Activated CD4-positive, alpha-beta T cell treated with anti-CD3 and anti-CD28 coated beads for 36 hours (primary cell): ENCODE measurements at regions of chr1 and their contacts with region 1.

Region 1: DNA sequence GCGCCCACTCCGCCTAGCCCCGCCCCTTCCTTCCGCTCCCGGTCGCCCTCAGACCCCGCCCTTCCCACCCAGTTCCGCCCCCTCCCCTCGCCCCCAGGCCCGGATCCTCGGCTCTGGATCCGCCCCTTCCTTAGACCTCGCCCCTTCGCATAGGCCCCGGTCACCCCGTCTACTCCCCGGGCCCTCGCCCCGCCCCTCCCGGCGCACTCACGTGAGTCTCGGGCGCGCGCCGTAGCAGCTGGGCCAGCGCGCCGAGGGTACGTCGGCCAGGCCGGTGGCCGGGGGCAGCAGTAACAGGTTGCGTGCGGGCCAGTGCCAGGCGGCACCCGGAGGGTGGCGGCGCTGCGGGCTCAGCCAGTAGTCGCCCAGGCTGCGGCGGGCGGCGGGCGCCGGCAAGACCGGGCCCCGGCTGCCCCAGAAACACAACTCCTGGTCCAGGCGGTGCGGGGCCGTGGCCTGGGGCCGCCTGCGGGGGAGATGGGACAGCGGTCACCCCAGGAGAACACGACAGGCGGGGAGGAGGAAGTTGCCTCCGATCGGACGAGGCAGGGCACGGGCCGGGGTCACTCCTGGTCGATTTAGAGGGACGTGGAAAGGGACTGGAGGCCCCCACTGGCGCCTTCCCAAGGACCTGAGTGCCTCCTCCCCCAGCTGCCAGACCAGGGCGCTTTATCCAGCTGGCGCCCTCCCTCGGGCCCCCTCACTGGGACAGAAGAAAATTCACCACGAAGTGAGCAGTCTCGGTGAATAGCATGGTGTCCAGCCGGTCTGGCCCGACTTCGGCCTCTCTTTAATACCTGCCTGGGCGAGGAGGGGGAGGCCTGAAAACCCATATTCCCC is 10.7 kb downstream of the FAM229A start:
- DNase-seq: peak; percentile 96
- ATAC-seq: peak; percentile 96
- H3K4me3 Mint-ChIP-seq: peak overlapping the region; percentile 73
- H3K27ac Mint-ChIP-seq: peak overlapping the region; percentile 82
- H3K4me1 Mint-ChIP-seq: peaks cover 20% of the 10 kb centered on the region
- H3K27me3 Mint-ChIP-seq: no peaks in the 10 kb centered on the region

Region 2: DNA sequence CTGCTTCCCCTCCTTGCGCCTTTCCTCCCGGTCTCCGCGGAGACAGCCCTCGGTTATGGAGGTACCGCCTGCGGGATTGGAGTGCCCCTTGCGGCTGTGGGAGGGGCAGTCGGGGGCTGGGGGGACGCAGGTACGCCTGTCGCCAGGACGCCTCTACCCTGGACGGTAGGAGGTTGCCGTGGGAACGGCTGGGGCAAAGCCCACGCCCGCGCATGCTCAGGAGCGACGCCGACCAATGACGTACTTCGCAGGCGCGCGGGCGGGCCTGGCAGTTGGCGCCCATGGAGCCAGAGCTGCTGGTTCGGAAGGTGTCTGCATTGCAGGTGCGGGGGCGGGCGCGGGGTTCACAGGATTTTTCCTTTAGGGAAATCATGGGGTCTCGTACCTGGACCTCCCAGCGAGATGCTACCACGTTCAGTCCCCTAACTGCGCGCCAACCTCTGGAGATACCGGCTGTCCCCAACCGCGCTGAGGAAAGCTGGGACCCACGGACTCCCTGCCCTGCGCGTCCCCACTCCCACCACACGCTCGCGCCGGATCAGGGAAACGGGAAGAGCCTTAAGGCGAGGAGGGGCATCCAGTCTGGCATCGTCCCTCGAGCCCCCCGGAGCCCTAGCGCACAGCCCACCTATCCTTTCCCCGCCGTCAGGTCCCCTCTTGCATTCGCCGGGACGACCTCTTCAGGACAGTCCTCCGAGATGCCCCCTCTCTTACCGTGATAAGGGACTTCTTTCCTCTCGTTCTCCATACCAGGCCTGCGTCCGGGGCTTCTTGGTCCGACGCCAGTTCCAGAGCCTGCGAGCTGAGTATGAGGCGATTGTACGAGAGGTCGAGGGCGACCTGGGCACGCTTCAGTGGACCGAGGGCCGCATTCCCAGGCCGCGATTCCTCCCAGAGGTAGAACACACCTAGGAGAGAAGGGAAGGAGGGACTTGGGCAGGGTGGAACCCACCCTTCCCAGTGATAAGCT is 145.9 kb before region 1 on chr1 and contains the start of gene IQCC:
- CTCF ChIA-PET with region 1: no interaction called
- POLR2A ChIA-PET with region 1: no interaction called
- intact Hi-C with region 1: loop called (anchors 1 to 5 kb)
- DNase-seq: peak; percentile 94
- ATAC-seq: peak; percentile 75
- H3K4me3 Mint-ChIP-seq: peak within 1 kb of the TSS; percentile 90
- H3K27ac Mint-ChIP-seq: peak within 1 kb of the TSS; percentile 87
- H3K4me1 Mint-ChIP-seq: peaks cover 28% of the 10 kb centered on the region
- H3K27me3 Mint-ChIP-seq: no peaks in the 10 kb centered on the region
- total RNA-seq, gene IQCC: 4.4 to 5.0 TPM

Region 3: GRCh38 chr1:32273388-32274208 is 78.0 kb before region 1 on chr1:
- CTCF ChIA-PET with region 1: interaction called, 3 read pairs
- POLR2A ChIA-PET with region 1: no interaction called
- intact Hi-C with region 1: loop called in 1 of 2 experiments (anchors 1 kb)
- DNase-seq: peak; percentile 91
- ATAC-seq: peak; percentile 93
- H3K4me3 Mint-ChIP-seq: peak overlapping the region; percentile 62
- H3K27ac Mint-ChIP-seq: peak overlapping the region; percentile 94
- H3K4me1 Mint-ChIP-seq: peaks cover 58% of the 10 kb centered on the region
- H3K27me3 Mint-ChIP-seq: no peaks in the 10 kb centered on the region

Region 4: DNA sequence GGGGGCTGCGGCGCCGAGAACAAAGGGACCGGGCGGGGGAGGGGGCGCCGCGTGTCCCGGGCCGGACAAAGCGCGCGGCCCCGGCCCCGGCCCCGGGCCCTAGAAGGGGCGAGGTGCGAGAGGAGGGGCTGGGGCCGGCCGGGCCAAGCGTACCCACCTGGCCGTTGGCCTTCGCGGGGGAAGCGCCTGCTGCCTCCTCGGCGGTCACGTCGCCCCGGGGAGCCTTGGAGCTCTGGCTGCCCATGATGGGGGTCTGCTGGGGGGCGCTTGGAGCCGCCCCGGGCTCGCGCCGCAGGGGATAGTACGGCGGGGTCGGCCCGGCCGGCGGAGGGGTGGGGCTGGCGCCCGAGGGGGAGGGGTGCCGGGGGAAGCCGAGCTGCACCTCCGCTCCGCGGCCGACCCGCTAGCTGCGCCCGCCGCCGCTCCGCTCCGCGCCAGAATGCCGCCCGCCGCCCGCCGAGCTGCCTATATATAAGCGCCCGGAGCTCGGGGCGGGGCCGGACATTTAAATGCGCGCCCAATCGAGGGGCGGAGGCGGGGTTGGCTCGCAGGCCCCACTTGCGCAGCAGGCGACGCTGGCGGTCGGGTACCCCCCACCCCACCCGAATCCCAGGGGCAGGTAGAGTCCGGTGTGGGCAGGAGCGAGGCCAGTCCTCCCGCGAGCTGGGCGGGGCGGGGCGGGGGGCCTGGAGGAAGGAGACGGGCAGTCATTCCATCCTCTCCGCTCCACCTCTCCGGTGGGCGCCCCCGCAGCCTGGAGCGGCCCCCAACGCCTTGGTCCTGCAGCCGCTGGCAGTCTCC is 15.6 kb before region 1 on chr1 and contains the start of gene MARCKSL1:
- CTCF ChIA-PET with region 1: interaction called, 8 read pairs
- POLR2A ChIA-PET with region 1: interaction called, 6 read pairs
- intact Hi-C with region 1: loop called (anchors 1 kb)
- DNase-seq: peak; percentile 88
- ATAC-seq: peak; percentile 50
- H3K4me3 Mint-ChIP-seq: peak within 1 kb of the TSS; percentile 77
- H3K27ac Mint-ChIP-seq: peak within 1 kb of the TSS; percentile 76
- H3K4me1 Mint-ChIP-seq: peaks cover 52% of the 10 kb centered on the region
- H3K27me3 Mint-ChIP-seq: no peaks in the 10 kb centered on the region
- total RNA-seq, gene MARCKSL1: 27.0 to 29.3 TPM

Region 5: GRCh38 chr1:32786856-32787255 is 435.2 kb after region 1 on chr1:
- CTCF ChIA-PET with region 1: no interaction called
- POLR2A ChIA-PET with region 1: no interaction called
- intact Hi-C with region 1: no loop called
- DNase-seq: no peak
- ATAC-seq: peak; percentile 30
- H3K4me3 Mint-ChIP-seq: no peak overlapping the region
- H3K27ac Mint-ChIP-seq: peak overlapping the region; percentile 25
- H3K4me1 Mint-ChIP-seq: no peaks in the 10 kb centered on the region
- H3K27me3 Mint-ChIP-seq: no peaks in the 10 kb centered on the region